ENCODE measurements at regions of chr19 and their contacts with region 1.

Region 1: GRCh38 chr19:7680606-7681339 is at the start of gene TRAPPC5:
- DNase-seq: peak; percentile 39
- H3K4me3 ChIP-seq: peak within 1 kb of the TSS; percentile 92
- H3K27ac ChIP-seq: peak within 1 kb of the TSS; percentile 39
- H3K27me3 ChIP-seq: peaks cover 3% of the 10 kb centered on the region
- CTCF ChIP-seq: peak; percentile 64
- polyA plus RNA-seq, gene TRAPPC5: 42.1 and 69.8 TPM in 2 replicates

Region 2: DNA sequence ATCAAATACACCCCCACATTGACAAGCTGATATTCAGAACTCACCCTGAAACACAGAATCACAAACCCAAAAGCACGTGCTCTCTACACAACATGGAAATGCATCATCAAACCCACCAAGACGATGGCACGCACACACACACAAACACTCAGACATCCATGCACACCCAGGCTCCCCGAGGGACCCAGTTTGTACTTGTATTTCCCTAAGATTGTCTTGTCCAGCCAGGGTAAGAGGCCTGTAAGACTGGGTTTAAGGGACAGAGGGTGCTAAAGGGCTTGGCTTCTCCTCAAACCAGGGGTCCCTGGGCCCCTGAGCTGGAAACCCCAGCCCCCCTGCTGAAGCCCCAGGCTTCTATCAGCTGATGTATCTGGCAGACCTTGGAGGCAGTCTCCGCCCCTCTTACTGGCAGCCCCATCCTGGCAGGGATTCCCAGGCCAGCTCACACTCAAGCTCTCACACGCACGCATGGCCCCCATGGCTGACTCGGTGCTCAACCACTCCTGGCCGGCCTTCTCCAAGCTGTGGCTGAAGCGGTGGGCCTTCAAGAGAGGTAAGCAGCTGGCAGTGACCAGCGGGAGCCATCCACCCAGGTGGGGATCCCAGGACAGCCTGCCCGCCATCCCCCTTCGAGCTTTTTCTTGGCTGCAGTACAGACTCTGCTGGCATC is 325.5 kb before region 1 on chr19:
- CTCF ChIA-PET with region 1: interaction called, 21 read pairs
- POLR2A ChIA-PET with region 1: no interaction called
- DNase-seq: no peak
- H3K4me3 ChIP-seq: no peak overlapping the region
- H3K27ac ChIP-seq: no peak overlapping the region
- H3K27me3 ChIP-seq: peaks cover 11% of the 10 kb centered on the region
- CTCF ChIP-seq: no peak

Region 3: GRCh38 chr19:7397687-7398086 is 283.1 kb before region 1 on chr19:
- CTCF ChIA-PET with region 1: interaction called, 11 read pairs
- POLR2A ChIA-PET with region 1: no interaction called
- DNase-seq: peak; percentile 43
- H3K4me3 ChIP-seq: no peak overlapping the region
- H3K27ac ChIP-seq: peak overlapping the region; percentile 39
- H3K27me3 ChIP-seq: no peaks in the 10 kb centered on the region
- CTCF ChIP-seq: no peak

Region 4: DNA sequence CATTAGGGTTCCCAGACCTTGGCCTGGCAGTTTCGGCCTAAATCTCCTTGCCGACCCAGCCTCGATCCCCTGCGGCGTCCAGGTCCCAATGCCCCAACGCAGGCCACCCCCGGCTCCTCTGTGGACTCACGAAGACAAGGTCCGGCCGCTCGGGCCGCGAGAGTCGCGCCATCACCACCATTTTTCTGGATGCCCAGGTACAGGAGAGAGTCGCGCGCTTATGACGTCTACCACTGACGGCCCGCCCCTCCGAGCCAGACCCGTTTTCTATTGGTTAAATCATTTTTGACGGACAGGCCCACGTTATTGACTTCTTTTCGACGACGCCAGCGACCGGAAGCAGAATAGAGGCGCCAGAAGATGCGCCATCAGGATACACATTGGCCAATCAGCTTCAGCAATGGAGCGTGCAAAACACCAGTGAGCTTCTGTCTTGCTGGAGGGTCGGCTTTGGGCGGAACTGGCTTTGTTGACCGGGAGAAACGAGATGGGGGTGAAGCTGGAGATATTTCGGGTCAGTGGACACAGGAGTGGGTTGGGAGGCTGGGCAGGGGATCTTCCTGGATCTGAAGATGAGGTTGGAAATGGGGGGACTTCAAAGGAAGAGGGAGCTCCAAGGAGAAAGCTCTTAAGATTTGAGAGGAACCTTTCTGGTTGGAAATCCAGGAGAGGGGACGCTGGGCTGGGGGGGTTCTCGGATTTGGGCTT is 51.3 kb before region 1 on chr19 and contains the starts of genes PET100 and XAB2:
- CTCF ChIA-PET with region 1: interaction called, 19 read pairs
- POLR2A ChIA-PET with region 1: interaction called, 7 read pairs
- DNase-seq: peak; percentile 97
- H3K4me3 ChIP-seq: peak within 1 kb of the TSS; percentile 97
- H3K27ac ChIP-seq: peak within 1 kb of the TSS; percentile 70
- H3K27me3 ChIP-seq: no peaks in the 10 kb centered on the region
- CTCF ChIP-seq: no peak
- polyA plus RNA-seq, gene PET100: 39.7 and 46.7 TPM in 2 replicates
- polyA plus RNA-seq, gene XAB2: 16.3 and 21.8 TPM in 2 replicates

Region 5: GRCh38 chr19:7652061-7652641 is 28.6 kb before region 1 on chr19:
- CTCF ChIA-PET with region 1: interaction called, 46 read pairs
- POLR2A ChIA-PET with region 1: interaction called, 11 read pairs
- DNase-seq: peak; percentile 16
- H3K4me3 ChIP-seq: peak overlapping the region; percentile 43
- H3K27ac ChIP-seq: no peak overlapping the region
- H3K27me3 ChIP-seq: peaks cover 2% of the 10 kb centered on the region
- CTCF ChIP-seq: peak; percentile 98

Region 6: GRCh38 chr19:7699417-7700401 is 18.9 kb after region 1 on chr19:
- CTCF ChIA-PET with region 1: interaction called, 13 read pairs
- POLR2A ChIA-PET with region 1: no interaction called
- DNase-seq: no peak
- H3K4me3 ChIP-seq: no peak overlapping the region
- H3K27ac ChIP-seq: no peak overlapping the region
- H3K27me3 ChIP-seq: peaks cover 4% of the 10 kb centered on the region
- CTCF ChIP-seq: no peak

Region 7: GRCh38 chr19:7799640-7800355 is 119.0 kb after region 1 on chr19:
- CTCF ChIA-PET with region 1: interaction called, 31 read pairs
- POLR2A ChIA-PET with region 1: interaction called, 4 read pairs
- DNase-seq: peak; percentile 55
- H3K4me3 ChIP-seq: peak overlapping the region; percentile 51
- H3K27ac ChIP-seq: no peak overlapping the region
- H3K27me3 ChIP-seq: peaks cover 2% of the 10 kb centered on the region
- CTCF ChIP-seq: peak; percentile 62